ENCODE measurements at regions of chr17 and their contacts with region 1.

Region 1: DNA sequence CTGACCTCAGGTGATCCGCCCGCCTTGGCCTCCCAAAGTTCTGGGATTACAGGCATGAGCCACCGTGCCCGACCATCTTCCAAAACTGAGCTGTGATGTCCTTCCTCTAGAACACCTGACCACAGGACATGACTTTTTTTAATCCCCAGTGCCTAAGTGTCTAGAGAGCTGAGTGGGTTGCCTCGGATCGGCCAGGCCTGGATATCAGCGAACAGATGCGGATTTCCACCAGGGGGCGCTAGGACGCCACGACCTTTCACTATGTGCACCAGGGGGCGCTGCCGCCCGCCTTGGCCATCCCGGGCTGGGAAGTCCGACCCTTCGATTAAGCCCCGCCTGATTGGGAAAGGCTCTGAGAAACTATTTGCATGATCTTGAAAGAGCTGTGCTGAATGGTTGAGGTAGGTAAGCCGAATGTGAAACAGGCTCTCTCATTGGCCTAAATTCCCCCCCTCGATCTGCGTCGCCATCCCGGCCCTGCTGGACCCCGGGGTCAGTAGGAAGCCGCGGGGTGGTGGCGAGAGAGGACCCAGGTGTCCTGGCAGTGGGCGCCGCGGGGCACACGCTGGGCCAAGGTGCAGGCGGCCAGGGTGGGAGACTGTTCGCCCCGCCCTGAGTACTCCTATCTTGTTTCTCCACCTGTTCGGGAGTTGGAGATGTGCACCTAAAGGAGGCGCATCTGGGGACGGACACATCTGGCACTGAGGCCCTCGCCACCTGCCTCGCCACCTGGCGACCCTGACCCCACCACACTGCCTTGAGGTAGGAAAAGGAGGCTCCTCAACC is at the start of gene ACBD4:
- DNase-seq: peak; percentile 97
- ATAC-seq: peak; percentile 76
- H3K4me3 Mint-ChIP-seq: peak within 1 kb of the TSS; percentile 72
- H3K27ac Mint-ChIP-seq: no peak within 1 kb of the TSS
- H3K4me1 Mint-ChIP-seq: peaks cover 14% of the 10 kb centered on the region; the same call in 1 of the 2 replicates
- H3K27me3 Mint-ChIP-seq: no peaks in the 10 kb centered on the region; the same call in 1 of the 2 replicates
- CTCF ChIP-seq: peak; percentile 100
- total RNA-seq, gene ACBD4: 12.7 to 21.0 TPM (median 21.0 TPM) in 3 replicates

Region 2: DNA sequence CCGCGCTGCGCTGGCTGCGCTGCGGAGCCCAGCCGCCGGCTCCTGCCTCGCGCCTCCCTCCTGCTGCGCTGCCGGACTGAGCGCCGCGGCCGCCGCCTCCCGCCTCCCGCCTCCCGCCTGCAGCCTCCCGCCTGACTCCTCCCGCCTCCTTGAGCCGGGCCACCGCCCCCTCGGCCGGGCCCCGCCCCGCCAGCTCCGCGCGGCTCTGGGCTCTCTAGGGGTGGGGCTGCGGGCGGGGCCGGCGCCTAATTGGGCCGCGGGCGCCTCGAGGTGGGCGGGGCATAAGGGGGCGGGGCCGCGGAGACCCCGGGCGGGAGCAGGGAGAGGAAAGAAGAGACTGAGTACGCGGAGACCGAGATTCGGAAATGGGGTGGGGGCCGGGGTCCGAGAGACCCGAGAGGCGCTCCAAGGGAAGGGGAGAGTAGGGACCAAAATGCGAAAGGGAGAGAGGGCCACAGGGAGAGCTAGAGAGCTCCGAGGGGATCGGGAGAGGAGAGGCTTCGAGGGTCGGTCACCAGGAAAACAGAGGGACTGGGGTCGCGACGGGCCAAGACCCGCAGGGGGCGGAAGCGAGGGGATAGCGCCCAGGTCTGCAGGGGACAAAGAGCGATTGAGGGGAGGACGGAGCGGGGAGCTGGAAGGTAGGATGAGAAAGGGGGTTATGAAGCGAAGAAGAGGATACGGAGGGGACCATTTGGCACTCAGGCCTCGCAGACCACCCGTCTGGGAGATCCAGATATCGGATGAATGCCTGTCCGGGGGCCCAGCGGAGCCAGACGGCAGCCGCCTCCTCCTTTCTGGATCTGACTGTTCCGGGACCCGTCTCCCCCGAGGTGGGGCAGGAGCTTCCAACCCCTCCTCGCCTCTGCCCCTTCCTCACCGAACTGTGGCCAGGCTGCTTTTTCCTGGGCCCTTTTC is 166.9 kb before region 1 on chr17 and contains the start of gene C1QL1:
- CTCF ChIA-PET with region 1: interaction called, 30 read pairs
- POLR2A ChIA-PET with region 1: no interaction called
- DNase-seq: peak; percentile 97
- ATAC-seq: peak; percentile 78
- H3K4me3 Mint-ChIP-seq: peak within 1 kb of the TSS; percentile 92
- H3K27ac Mint-ChIP-seq: peak within 1 kb of the TSS; percentile 87
- H3K4me1 Mint-ChIP-seq: peaks cover 36% of the 10 kb centered on the region
- H3K27me3 Mint-ChIP-seq: peaks cover 69% of the 10 kb centered on the region
- CTCF ChIP-seq: no peak
- total RNA-seq, gene C1QL1: 13.4 to 16.8 TPM (median 15.6 TPM) in 3 replicates

Region 3: GRCh38 chr17:45038728-45039634 is 96.4 kb before region 1 on chr17:
- CTCF ChIA-PET with region 1: interaction called, 13 read pairs
- POLR2A ChIA-PET with region 1: no interaction called
- DNase-seq: no peak
- ATAC-seq: no peak
- H3K4me3 Mint-ChIP-seq: no peak overlapping the region
- H3K27ac Mint-ChIP-seq: peak overlapping the region; percentile 88
- H3K4me1 Mint-ChIP-seq: peaks cover 34% of the 10 kb centered on the region
- H3K27me3 Mint-ChIP-seq: no peaks in the 10 kb centered on the region
- CTCF ChIP-seq: no peak

Region 4: GRCh38 chr17:45110668-45111611 is 24.4 kb before region 1 on chr17:
- CTCF ChIA-PET with region 1: interaction called, 26 read pairs
- POLR2A ChIA-PET with region 1: no interaction called
- DNase-seq: no peak
- ATAC-seq: 0 out of 2 replicates have a peak, but pooled peaks have one; percentile 11
- H3K4me3 Mint-ChIP-seq: no peak overlapping the region
- H3K27ac Mint-ChIP-seq: peak overlapping the region; percentile 63
- H3K4me1 Mint-ChIP-seq: peaks cover 8% of the 10 kb centered on the region
- H3K27me3 Mint-ChIP-seq: no peaks in the 10 kb centered on the region
- CTCF ChIP-seq: no peak

Region 5: GRCh38 chr17:45161019-45161825 is 25.8 kb after region 1 on chr17:
- CTCF ChIA-PET with region 1: interaction called, 531 read pairs
- POLR2A ChIA-PET with region 1: interaction called, 17 read pairs
- DNase-seq: peak; percentile 98
- ATAC-seq: peak; percentile 93
- H3K4me3 Mint-ChIP-seq: peak overlapping the region; percentile 99
- H3K27ac Mint-ChIP-seq: peak overlapping the region; percentile 95
- H3K4me1 Mint-ChIP-seq: peaks cover 32% of the 10 kb centered on the region
- H3K27me3 Mint-ChIP-seq: no peaks in the 10 kb centered on the region
- CTCF ChIP-seq: no peak

Region 6: GRCh38 chr17:45197555-45198334 is 62.4 kb after region 1 on chr17:
- CTCF ChIA-PET with region 1: interaction called, 340 read pairs
- POLR2A ChIA-PET with region 1: interaction called, 12 read pairs
- DNase-seq: peak; percentile 99
- ATAC-seq: peak; percentile 98
- H3K4me3 Mint-ChIP-seq: no peak overlapping the region
- H3K27ac Mint-ChIP-seq: peak overlapping the region; percentile 84
- H3K4me1 Mint-ChIP-seq: peaks cover 18% of the 10 kb centered on the region
- H3K27me3 Mint-ChIP-seq: peaks cover under 1% of the 10 kb centered on the region; the same call in 1 of the 2 replicates
- CTCF ChIP-seq: peak; percentile 94

Region 7: GRCh38 chr17:45247429-45248131 is 112.2 kb after region 1 on chr17:
- CTCF ChIA-PET with region 1: interaction called, 23 read pairs
- POLR2A ChIA-PET with region 1: no interaction called
- DNase-seq: peak; percentile 99
- ATAC-seq: peak; percentile 87
- H3K4me3 Mint-ChIP-seq: peak overlapping the region; percentile 83
- H3K27ac Mint-ChIP-seq: peak overlapping the region; percentile 80
- H3K4me1 Mint-ChIP-seq: peaks cover 21% of the 10 kb centered on the region
- H3K27me3 Mint-ChIP-seq: peaks cover 2% of the 10 kb centered on the region
- CTCF ChIP-seq: no peak

Region 8: DNA sequence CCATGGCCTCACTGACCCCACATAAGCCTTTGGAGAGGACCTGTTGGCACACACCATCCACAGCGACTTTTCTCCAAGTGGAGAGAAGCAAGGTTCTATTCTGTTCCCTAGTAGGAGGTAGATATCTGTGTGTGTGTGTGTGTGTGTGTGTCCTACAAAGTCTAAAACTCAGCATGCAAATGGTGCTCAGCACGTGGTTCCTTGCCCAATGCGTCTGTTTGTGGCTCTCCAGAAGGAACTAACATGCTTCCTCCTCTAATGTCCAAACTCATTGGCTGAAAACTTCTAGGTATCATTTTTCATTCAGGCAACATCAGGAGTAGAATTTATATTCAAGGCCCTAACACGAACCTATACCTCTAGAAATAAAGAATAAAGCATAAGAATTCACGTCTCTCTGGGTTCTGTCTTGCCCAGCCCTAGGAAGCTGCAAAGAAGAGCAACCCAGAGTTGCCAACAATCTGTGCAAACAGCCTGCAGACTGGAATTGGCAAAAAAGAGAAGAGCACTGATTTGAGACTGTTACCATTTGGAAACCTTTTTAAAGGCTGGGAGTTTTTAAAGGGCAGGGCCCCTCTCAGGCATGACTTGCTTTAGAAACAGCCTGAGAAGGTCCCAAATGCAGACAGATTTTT is 155.9 kb after region 1 on chr17:
- CTCF ChIA-PET with region 1: no interaction called
- POLR2A ChIA-PET with region 1: no interaction called
- DNase-seq: no peak
- ATAC-seq: no peak
- H3K4me3 Mint-ChIP-seq: no peak overlapping the region
- H3K27ac Mint-ChIP-seq: no peak overlapping the region
- H3K4me1 Mint-ChIP-seq: no peaks in the 10 kb centered on the region
- H3K27me3 Mint-ChIP-seq: no peaks in the 10 kb centered on the region
- CTCF ChIP-seq: no peak

Region 9: DNA sequence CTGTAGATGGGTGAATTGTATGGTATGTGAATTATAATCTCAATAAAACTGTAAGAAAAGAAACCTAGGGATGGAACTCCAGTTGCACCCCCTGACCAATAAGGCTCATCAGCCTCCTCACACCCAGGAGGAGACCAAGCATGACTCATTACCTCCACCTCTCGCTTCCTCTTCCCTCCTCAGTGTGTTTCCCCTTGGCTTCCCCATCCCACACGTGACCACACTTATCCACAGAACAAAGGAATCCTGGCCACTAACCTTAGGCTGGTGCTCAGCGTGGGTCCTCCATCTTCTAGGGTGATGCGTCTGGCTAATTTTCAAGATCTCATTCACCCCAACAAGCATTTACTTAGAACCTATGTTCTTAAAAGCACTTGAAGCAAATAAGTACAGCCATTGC is 217.7 kb after region 1 on chr17:
- CTCF ChIA-PET with region 1: no interaction called
- POLR2A ChIA-PET with region 1: no interaction called
- DNase-seq: no peak
- ATAC-seq: no peak
- H3K4me3 Mint-ChIP-seq: no peak overlapping the region
- H3K27ac Mint-ChIP-seq: no peak overlapping the region
- H3K4me1 Mint-ChIP-seq: no peaks in the 10 kb centered on the region
- H3K27me3 Mint-ChIP-seq: peaks cover 21% of the 10 kb centered on the region
- CTCF ChIP-seq: no peak